H1 (cell line): ENCODE measurements at regions of chr5 and their contacts with region 1.

Region 1: DNA sequence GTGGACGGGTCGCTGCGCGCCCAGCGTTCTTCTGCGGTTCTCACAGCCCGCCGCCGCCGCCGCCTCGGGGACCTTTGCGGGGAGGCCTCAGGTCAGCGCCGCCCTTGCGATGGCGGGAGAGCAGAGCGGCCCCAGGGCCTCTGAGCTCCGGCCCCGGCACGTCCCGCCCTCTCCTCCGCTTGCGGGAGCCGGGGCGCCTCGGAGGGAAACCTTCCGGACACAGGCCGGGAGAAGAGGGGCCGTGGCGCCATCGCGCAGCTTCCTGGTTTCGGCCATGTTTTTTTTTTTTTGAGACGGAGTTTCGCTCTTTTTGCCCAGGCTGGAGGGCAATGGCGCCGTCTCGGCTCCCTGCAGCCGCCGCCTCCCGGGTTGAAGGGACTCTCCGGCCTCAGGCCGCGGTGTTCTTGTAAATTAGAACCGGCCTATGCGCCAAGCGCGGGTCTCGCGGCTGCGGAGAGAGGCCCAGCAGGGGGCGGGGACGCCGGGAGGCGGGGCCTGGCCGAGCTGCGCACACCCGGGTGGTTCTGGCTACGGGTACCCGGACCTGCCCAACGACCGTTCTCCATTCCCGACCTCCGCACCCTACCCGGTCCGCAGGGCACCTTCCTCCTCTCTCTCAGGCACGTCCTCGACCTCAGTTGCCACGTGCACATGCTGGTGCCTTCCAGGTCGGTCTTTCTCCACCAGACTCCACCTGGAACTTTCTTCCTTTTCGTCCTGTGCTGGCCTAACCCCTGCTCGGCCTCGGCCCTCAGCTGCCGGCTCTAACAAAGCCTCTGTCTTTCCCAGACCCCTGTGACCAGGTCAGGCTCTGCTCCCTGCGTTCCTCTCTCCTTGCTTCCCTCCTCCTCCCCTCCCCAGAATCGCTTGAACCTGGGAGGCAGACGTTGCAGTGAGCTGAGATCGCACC is 28.8 kb upstream of the MGAT1 start:
- DNase-seq: peak in 1 of 2 experiments; percentile 86
- H3K4me3 ChIP-seq: peak overlapping the region; percentile 69 to 84 (median 75)
- H3K27ac ChIP-seq: peak overlapping the region; percentile 50; the same call in 1 of the 2 replicates
- H3K4me1 ChIP-seq: peaks cover 0 to 11% (median 0%) of the 10 kb centered on the region in 4 experiments; a peak in 3 of 7 replicates
- H3K27me3 ChIP-seq: peaks cover 5 to 31% (median 27%) of the 10 kb centered on the region in 4 experiments
- CTCF ChIP-seq: peak in 1 of 3 experiments; percentile 2; a peak in 1 of 4 replicates
- EP300 ChIP-seq: no peak
- POLR2A ChIP-seq: peak; percentile 12 to 56
- RAD21 ChIP-seq: no peak

Region 2: DNA sequence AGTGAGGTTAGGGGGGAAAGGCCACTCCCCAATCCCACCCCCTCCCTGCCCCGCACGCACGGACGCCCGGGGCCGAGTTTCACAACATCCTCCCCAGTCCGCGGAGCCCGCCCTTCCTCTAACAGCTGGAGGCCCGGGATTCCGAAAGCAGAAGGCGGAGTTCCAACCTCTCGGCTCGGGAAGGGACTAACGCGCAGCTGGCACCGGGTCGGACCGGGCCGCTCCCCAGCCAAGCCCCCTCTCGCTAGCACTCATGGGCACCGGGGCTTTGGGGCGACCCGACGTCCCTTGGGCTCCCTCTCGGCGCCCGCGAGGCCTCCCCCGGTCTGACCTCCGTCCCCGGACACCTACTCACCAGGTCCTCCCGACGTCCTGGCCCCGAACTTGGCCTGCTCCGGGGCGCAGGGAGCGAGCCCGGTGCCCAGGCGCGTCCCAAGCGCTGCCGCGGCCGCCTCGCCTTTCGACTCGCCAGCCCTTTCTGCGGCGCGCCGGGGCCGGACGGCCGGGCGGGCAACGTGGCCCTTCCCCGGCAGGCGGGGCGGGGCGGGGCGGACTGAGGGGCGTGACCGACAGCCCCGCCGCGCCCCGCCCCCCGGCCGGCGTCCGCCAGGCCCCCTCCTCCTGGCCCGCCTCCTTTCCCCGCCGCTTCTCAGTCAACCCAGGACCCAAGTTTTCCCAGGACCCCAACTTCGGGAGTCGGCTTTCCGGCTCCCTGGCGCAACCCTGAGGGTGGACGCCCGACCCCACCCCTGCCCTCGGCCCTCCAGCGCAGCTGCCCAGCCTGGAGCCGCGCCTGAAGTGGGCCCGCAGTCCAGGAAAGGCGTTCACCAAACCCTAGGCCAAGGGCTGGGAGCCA is 28.8 kb before region 1 on chr5 and contains the start of gene MGAT1:
- CTCF ChIA-PET with region 1: no interaction called
- POLR2A ChIA-PET with region 1: interaction called, 13 read pairs
- DNase-seq: peak in 1 of 2 experiments; percentile 90
- H3K4me3 ChIP-seq: peak within 1 kb of the TSS; percentile 70 to 95 (median 84)
- H3K27ac ChIP-seq: peak within 1 kb of the TSS; percentile 95
- H3K4me1 ChIP-seq: peaks cover 4 to 24% (median 16%) of the 10 kb centered on the region in 4 experiments
- H3K27me3 ChIP-seq: no peaks in the 10 kb centered on the region
- CTCF ChIP-seq: no peak
- EP300 ChIP-seq: no peak
- POLR2A ChIP-seq: peak in 1 of 2 experiments; percentile 68; a peak in 2 of 3 replicates
- RAD21 ChIP-seq: no peak
- total RNA-seq, gene MGAT1: 77.0 and 83.8 TPM in 2 replicates

Region 3: DNA sequence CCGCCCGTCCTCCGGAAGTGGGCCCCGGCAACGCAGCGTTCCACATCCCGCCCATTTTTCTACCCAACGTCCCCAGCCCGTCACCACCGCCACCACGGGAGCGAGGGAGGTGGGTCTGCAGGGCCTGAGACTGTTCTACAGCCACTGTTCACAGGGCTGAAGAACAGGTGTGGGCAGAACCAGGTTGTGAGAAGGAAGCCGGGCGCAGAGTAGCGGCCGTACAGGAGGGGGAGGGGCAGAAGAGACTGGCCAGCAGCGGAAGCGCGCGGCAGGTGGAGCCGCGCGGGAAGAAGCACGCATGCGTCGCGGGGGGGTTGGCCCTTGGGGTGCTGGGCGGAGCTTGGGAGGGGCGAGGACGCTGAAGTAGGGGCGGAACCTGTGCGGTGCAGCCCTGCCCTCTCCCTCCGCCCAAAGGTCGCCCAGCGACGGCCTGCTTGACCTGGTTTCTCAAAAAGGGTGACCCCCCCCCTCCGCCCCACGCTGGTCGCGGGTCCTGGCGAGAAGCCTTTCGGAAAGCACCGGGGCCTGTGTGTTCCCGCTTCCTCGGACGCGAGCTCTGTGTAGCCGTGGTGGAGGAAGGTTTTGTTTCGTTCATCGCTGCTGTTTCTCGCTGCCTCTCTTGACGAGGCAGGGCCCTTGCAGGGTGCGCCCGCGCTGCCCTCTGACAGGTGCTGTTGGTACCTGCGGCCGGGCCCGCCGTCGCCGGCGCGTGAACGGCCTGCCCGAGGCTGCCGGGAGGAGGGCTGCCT is 21.0 kb before region 1 on chr5:
- CTCF ChIA-PET with region 1: interaction called, 4 read pairs
- POLR2A ChIA-PET with region 1: interaction called, 21 read pairs
- DNase-seq: peak; percentile 88 to 97
- H3K4me3 ChIP-seq: peak overlapping the region; percentile 53 to 79 (median 69)
- H3K27ac ChIP-seq: peak overlapping the region; percentile 96
- H3K4me1 ChIP-seq: peaks cover 3 to 26% (median 10%) of the 10 kb centered on the region in 4 experiments; a peak in 6 of 7 replicates
- H3K27me3 ChIP-seq: no peaks in the 10 kb centered on the region; a peak in 1 of 7 replicates
- CTCF ChIP-seq: no peak
- EP300 ChIP-seq: no peak
- POLR2A ChIP-seq: peak in 1 of 2 experiments; percentile 93; a peak in 2 of 3 replicates
- RAD21 ChIP-seq: no peak

Region 4: GRCh38 chr5:180848878-180849277 is 17.5 kb after region 1 on chr5:
- CTCF ChIA-PET with region 1: interaction called, 5 read pairs
- POLR2A ChIA-PET with region 1: interaction called, 12 read pairs
- DNase-seq: no peak
- H3K4me3 ChIP-seq: no peak overlapping the region
- H3K27ac ChIP-seq: no peak overlapping the region
- H3K4me1 ChIP-seq: peaks cover 0 to 7% (median 2%) of the 10 kb centered on the region in 4 experiments; a peak in 1 of 7 replicates
- H3K27me3 ChIP-seq: no peaks in the 10 kb centered on the region
- CTCF ChIP-seq: no peak
- EP300 ChIP-seq: no peak
- POLR2A ChIP-seq: no peak
- RAD21 ChIP-seq: no peak